ENCODE measurements at regions of chr15 and their contacts with region 1.

Region 1: GRCh38 chr15:63600616-63601025 is 3.4 kb downstream of the FBXL22 start:
- DNase-seq: peak; percentile 93
- H3K4me3 ChIP-seq: peak overlapping the region; percentile 75 to 78 (median 77)
- H3K27ac ChIP-seq: peak overlapping the region; percentile 88 to 91 (median 90)
- H3K4me1 ChIP-seq: peaks cover 51 to 72% (median 69%) of the 10 kb centered on the region in 4 donors
- H3K27me3 ChIP-seq: no peaks in the 10 kb centered on the region
- CTCF ChIP-seq: peak; percentile 4 to 61 (median 30)
- EP300 ChIP-seq: no peak
- POLR2A ChIP-seq: peak; percentile 55

Region 2: DNA sequence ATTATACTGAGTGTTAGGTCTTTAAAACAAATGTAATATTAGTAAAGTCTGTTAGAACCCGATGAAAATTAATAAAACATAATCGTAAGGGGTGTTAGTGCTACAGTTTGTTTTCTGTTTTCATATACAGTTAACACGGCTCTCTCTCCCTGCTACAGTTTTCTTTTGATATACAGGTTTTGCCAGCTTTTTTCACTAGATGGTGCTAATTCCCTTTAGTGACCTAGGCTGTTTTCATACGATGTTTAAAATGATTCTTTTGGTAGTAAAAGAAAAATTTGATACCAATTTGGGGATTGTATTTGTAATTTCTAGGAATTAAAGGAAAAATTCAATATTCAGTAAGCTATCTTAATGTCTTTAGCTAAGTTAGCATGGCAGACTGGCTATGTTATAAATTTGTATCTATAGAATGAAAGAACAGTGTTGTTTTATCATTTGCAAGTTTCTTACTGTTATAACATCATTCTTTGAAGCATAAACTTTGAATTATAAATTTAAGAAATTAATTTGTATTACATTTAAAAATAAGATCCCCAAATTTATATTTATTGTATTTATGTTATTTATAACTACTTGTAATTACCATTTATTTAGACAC is 311.7 kb before region 1 on chr15:
- intact Hi-C with region 1: loop called (anchors 10 kb)
- DNase-seq: no peak
- H3K4me3 ChIP-seq: no peak overlapping the region
- H3K27ac ChIP-seq: no peak overlapping the region
- H3K4me1 ChIP-seq: peaks cover 9 to 13% (median 10%) of the 10 kb centered on the region in 4 donors
- H3K27me3 ChIP-seq: no peaks in the 10 kb centered on the region
- CTCF ChIP-seq: peak; percentile 62 to 79 (median 73)
- EP300 ChIP-seq: no peak
- POLR2A ChIP-seq: no peak

Region 3: DNA sequence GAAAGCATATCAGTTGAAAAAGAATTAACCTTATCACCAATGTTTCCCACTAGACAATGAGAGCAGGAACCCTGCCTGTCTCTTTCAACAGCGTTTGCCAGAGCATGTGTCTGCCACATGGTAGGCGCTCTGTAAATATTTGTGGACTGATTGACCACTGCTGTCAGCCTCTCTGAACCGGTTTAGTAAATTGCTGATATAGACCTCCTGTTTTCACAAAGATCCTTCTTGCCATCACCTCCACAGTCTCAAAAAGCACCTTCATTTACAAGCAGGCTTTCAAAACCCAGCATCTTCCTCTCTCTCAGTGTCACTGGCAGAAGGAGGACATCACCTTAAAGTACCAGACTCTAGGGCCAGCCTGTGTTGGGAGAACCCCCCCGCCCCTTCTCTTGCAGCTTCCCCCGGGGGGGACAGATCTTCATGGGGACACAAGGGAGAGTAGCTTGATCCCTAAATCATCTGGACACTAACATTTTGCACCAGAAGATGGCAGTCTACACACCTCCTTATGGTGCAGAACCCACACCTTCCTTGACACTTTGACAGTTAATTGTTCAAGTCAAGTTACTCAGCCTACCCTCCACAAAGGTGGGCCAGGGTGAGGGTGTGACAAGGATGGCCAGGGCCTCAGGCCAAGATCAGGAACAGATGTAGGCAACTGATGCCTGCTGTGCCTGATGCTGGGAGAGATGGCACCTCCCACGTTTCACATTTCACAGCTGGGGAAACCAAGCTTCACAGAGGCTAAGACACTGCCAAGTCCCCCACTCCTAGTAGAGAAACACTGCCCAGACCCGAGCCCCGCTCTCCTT is 134.0 kb before region 1 on chr15:
- intact Hi-C with region 1: loop called (anchors 5 kb)
- DNase-seq: no peak
- H3K4me3 ChIP-seq: no peak overlapping the region
- H3K27ac ChIP-seq: no peak overlapping the region
- H3K4me1 ChIP-seq: peaks cover 11 to 55% (median 52%) of the 10 kb centered on the region in 4 donors
- H3K27me3 ChIP-seq: no peaks in the 10 kb centered on the region
- CTCF ChIP-seq: peak; percentile 53 to 71 (median 65)
- EP300 ChIP-seq: no peak
- POLR2A ChIP-seq: no peak

Region 4: DNA sequence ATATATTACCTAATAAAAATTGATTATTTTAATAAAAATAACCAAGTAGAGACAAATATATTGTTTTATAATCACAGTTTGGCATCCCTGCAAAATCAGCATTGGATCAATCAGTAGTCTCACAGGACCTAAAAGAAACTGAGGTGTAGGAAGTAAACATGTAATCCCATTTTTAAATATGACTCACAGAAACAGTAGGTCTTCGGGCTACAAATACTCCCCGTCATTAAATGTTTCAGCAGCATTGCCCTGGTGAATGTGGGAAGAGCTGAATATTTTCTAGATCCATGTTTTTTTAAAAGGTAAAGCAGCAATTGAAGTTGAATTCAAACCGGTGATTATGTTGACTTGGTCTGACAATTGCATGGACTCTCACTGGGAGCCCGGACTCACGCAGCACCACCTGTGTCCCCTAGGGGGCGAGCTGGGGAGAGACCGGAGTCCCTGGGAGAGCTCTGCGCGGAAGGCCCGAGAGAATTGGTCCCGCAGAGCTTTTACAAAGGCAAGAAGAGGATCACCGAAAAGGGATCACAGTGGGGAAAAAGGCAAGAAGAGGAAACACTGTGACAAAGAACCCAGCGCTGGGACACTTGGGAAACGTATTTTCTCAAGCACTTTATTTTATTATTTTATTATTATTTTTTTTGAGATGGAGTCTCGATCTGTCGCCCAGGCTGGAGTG is 113.4 kb before region 1 on chr15:
- intact Hi-C with region 1: loop called (anchors 5 kb)
- DNase-seq: peak; percentile 97
- H3K4me3 ChIP-seq: no peak overlapping the region
- H3K27ac ChIP-seq: no peak overlapping the region
- H3K4me1 ChIP-seq: peaks cover 0 to 16% (median 15%) of the 10 kb centered on the region in 4 donors
- H3K27me3 ChIP-seq: no peaks in the 10 kb centered on the region
- CTCF ChIP-seq: peak; percentile 90 to 98 (median 94)
- EP300 ChIP-seq: no peak
- POLR2A ChIP-seq: no peak

Region 5: DNA sequence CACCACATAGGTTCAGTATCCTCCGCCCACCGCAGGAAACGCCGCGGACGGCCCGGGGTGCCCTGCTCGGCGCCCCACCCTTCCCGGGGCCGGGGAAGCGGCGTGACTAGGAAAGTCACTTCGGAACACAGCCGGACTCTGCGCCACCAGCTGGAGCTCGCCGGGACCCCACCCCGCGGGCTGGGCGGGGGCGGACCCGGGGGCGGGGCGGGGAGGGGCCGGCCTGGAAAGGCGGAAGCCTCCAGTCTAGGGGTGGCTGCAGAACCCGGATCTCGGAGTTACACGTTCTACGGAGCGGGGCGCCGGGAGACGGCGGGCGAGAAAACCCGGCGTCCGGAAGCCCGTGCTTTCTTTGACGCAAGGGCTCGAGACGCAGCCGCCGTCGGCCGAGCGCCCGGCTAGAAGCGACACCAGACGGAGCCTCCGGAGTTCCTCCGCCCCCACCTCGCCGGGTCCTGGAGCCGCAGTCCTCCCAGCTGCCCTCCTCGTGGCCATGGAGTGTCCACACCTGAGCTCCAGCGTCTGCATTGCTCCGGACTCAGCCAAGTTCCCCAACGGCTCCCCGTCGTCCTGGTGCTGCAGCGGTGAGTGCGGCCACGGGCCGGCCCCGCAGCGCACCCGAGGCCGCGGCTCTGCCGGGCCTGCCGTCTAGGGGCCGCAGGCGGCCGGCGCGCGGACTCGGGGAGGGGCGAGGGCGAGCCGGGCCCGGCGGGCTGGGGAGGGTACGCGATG is 96.2 kb before region 1 on chr15 and contains the start of gene USP3:
- intact Hi-C with region 1: loop called (anchors 5 kb)
- DNase-seq: peak; percentile 98
- H3K4me3 ChIP-seq: peak within 1 kb of the TSS; percentile 77 to 97 (median 88)
- H3K27ac ChIP-seq: peak within 1 kb of the TSS; percentile 99 to 100 (median 99)
- H3K4me1 ChIP-seq: peaks cover 65 to 74% (median 71%) of the 10 kb centered on the region in 4 donors
- H3K27me3 ChIP-seq: peaks cover 0 to 5% (median 0%) of the 10 kb centered on the region in 4 donors
- CTCF ChIP-seq: peak in 1 of 3 experiments; percentile 65
- EP300 ChIP-seq: no peak
- POLR2A ChIP-seq: peak; percentile 56
- total RNA-seq, gene USP3: 40.1 to 46.5 (median 41.3) TPM

Region 6: DNA sequence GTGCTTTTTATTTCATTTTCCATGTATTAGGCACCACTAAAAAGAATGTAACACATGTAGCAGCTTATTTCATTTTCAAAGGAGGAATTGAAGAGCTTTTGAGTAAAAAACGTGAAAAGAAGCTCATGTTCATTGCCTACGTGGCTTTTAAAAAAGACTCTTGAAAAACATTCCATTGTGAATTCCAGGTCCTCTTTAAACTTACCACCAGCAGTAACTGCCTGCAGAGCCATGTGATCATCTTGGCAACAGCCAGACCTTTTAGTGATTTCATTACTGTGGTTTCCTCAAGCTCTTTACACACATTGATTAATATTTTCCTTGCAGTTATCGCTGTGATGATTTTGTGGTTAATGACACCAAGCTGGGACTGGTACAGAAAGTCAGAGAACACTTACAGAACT is 47.2 kb before region 1 on chr15:
- intact Hi-C with region 1: loop called (anchors 5 kb)
- DNase-seq: no peak
- H3K4me3 ChIP-seq: peak overlapping the region; percentile 1 to 17 (median 10)
- H3K27ac ChIP-seq: peak overlapping the region; percentile 56 to 67 (median 60)
- H3K4me1 ChIP-seq: peaks cover 19 to 55% (median 47%) of the 10 kb centered on the region in 4 donors
- H3K27me3 ChIP-seq: no peaks in the 10 kb centered on the region
- CTCF ChIP-seq: no peak
- EP300 ChIP-seq: no peak
- POLR2A ChIP-seq: no peak

Region 7: GRCh38 chr15:63922261-63922904 is 321.8 kb after region 1 on chr15:
- intact Hi-C with region 1: no loop called
- DNase-seq: no peak
- H3K4me3 ChIP-seq: no peak overlapping the region
- H3K27ac ChIP-seq: no peak overlapping the region
- H3K4me1 ChIP-seq: peaks cover 5 to 9% (median 8%) of the 10 kb centered on the region in 4 donors
- H3K27me3 ChIP-seq: no peaks in the 10 kb centered on the region
- CTCF ChIP-seq: no peak
- EP300 ChIP-seq: no peak
- POLR2A ChIP-seq: no peak

Measured in esophagus muscularis mucosa (tissue), 4 donors.